ENCODE measurements at regions of chr20 and their contacts with region 1.

Region 1: GRCh38 chr20:62339647-62340070 is 27.5 kb downstream of the LAMA5 start:
- DNase-seq: no peak
- H3K4me3 ChIP-seq: no peak overlapping the region
- H3K27ac ChIP-seq: no peak overlapping the region
- H3K4me1 ChIP-seq: no peaks in the 10 kb centered on the region
- H3K27me3 ChIP-seq: no peaks in the 10 kb centered on the region
- CTCF ChIP-seq: no peak
- EP300 ChIP-seq: no peak
- POLR2A ChIP-seq: no peak
- RAD21 ChIP-seq: no peak

Region 2: DNA sequence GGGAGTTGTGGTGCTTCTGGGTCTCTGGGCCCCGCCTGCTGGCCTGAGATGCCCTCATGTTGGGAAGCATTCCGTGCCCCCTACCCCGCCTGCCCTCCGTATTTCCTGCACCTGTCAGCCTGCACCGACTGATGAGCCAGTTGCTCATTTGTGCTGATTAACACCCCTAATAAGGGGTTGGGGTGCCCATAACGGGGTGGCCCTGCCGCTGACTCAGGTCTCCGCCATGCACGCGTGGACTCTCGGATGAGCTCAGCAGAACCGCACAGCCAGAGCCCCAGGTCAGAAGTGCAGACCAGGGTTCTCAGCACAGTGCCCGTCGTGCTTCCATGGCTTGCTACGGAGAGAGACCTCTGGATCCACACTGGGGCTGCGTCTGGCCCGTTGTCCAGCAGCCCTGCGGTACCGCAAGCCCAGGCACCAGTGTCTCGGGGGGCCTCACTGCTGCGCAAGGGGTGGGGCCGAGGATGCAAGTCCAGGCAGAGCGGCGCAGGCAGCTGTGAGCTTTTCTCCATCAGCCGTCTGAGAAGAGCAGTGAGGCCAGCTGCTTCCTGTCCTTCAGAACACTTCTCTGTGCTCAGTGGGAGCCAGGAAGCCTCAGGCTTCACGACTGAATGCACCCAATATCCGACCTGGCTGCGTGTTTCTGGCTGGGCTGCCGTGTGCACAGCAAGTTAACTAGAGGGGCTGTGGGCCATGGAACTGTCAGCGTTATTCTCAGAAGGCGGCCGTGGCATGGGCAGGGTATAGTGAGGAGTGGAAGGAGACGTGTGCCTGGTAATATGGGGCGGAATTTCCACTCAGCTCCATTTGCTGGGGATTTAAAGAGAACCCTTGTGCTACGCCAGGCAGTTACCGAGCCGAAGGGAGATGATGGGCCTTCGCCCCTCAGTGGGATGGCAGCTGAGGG is 138.2 kb before region 1 on chr20:
- CTCF ChIA-PET with region 1: no interaction called
- POLR2A ChIA-PET with region 1: no interaction called
- DNase-seq: no peak
- H3K4me3 ChIP-seq: no peak overlapping the region
- H3K27ac ChIP-seq: no peak overlapping the region
- H3K4me1 ChIP-seq: no peaks in the 10 kb centered on the region
- H3K27me3 ChIP-seq: no peaks in the 10 kb centered on the region
- CTCF ChIP-seq: no peak
- EP300 ChIP-seq: no peak
- POLR2A ChIP-seq: no peak
- RAD21 ChIP-seq: no peak

Region 3: GRCh38 chr20:62285722-62286121 is 53.9 kb before region 1 on chr20:
- CTCF ChIA-PET with region 1: no interaction called
- POLR2A ChIA-PET with region 1: no interaction called
- DNase-seq: no peak
- H3K4me3 ChIP-seq: no peak overlapping the region
- H3K27ac ChIP-seq: no peak overlapping the region
- H3K4me1 ChIP-seq: no peaks in the 10 kb centered on the region
- H3K27me3 ChIP-seq: no peaks in the 10 kb centered on the region
- CTCF ChIP-seq: no peak
- EP300 ChIP-seq: no peak
- POLR2A ChIP-seq: no peak
- RAD21 ChIP-seq: no peak

Region 4: DNA sequence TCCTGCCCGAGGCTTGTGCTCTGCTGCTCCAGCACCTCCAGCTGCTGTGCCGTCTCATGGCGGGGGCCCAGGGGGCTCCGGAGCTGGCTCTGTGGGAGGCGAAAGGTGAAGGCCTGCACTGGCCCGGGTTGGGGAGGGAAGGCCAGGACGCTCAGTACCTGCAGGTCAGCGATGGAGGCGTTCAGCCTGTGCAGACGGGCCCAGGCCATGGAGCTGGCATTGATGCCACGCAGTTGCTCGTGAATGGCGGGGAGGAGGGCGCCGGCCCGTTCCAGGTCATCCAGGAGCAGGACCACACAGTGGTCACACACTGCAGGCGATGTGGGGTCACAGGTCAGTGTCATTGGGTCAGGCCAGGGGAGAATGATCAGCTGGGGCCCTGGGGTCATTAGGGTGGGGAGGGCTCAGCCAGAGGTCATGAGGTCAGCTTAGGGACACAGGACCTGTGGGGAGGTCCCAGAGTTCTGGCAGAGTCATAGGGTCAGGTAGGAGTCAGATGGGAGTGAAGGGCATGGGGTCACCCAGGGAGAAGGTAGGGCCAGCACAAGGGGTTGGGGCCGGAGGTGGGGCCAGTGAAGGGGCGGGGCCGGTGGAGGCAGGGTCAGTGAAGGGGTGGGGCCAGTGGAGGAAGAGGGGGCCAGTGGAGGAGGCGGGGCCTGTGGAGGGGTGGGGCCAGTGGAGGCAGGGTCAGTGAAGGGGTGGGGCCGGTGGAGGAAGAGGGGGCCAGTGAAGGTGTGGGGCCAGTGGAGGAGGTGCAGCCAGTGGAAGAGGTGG is 18.9 kb before region 1 on chr20:
- CTCF ChIA-PET with region 1: interaction called, 3 read pairs
- POLR2A ChIA-PET with region 1: interaction called, 95 read pairs
- DNase-seq: no peak
- H3K4me3 ChIP-seq: no peak overlapping the region
- H3K27ac ChIP-seq: no peak overlapping the region
- H3K4me1 ChIP-seq: no peaks in the 10 kb centered on the region
- H3K27me3 ChIP-seq: no peaks in the 10 kb centered on the region
- CTCF ChIP-seq: no peak
- EP300 ChIP-seq: no peak
- POLR2A ChIP-seq: no peak
- RAD21 ChIP-seq: no peak

Region 5: DNA sequence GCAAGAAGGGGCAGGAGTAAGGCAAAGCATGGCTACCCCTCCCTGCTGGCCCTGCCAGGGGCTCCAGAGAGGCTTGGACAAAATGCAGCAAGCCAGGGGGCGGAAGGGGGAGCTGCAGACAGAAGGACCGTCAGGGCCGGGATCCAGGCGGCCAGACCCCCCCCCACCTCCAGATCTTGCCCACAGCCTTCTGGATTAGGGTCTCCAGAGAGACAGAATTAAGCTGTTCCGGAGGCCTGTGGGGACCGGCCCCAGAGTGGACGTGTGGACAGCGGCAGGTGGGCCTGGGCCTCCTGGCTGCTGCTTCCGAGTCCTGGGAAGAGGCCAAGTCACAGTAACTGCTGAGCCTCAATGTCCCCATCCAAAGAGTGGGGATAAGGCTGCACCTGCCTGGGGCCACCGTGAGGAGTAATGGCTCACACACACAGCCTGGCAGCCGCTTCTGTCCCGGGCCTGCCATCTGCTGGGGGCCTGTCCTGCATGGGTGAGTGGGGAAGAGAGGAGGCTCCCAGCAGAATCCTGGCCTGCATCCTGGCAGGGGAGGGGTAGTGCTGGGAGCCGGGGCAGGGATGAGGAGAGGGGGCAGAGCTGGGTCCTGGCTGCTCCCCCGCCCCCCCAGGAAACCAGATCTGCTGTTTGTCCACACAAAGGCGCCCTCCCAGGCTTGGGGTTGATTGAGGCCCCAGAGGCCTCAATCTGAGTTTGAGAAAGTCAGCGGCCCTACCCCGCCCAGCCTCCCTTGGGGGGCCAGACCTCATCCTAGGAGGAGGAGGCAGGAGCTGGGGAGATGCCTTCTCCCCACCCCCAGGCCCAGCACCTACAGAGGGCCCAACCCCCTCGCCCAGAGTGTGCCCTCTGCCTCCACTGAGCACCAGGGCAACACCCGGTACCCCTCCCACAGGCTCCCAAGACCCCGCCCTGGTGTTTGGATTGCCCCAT is 23.6 kb after region 1 on chr20:
- CTCF ChIA-PET with region 1: interaction called, 13 read pairs
- POLR2A ChIA-PET with region 1: interaction called, 10 read pairs
- DNase-seq: peak in 1 of 2 experiments; percentile 62
- H3K4me3 ChIP-seq: no peak overlapping the region
- H3K27ac ChIP-seq: peak overlapping the region; percentile 92
- H3K4me1 ChIP-seq: peaks cover 10 to 75% (median 66%) of the 10 kb centered on the region in 4 experiments
- H3K27me3 ChIP-seq: no peaks in the 10 kb centered on the region
- CTCF ChIP-seq: peak in 2 of 3 experiments; percentile 3 to 11; a peak in 2 of 4 replicates
- EP300 ChIP-seq: no peak
- POLR2A ChIP-seq: 0 out of 3 replicates have a peak, but pooled peaks of 1 of the 2 experiments have one; percentile 41
- RAD21 ChIP-seq: peak in 1 of 2 experiments; percentile 44; a peak in 2 of 4 replicates

Measured in H1 (cell line).